Thyroid gland (tissue), 4 donors: ENCODE measurements at regions of chr5 and their contacts with region 1.

Region 1: DNA sequence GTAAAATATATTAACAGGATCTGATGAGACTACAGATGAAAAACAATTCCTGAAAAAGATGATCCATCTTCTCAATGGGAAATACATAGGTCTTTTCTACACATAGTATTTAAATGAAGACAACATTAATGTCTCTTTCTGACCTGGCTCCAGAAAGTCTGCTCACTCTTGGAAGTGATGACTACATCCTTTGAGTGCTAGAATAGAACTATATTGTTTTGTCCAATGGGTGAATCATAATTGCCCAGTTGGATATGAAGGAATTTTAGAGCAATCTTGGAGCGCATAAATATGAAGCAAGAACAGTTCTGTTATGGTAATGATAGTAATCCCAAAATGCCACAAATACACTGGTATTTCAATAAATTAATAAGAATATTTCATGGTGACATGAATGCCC is 322.1 kb downstream of the DEPDC1B start:
- DNase-seq: no peak
- H3K4me3 ChIP-seq: no peak overlapping the region
- H3K27ac ChIP-seq: no peak overlapping the region
- H3K4me1 ChIP-seq: peaks cover 9 to 12% of the 10 kb centered on the region in 2 donors
- H3K27me3 ChIP-seq: no peaks in the 10 kb centered on the region
- CTCF ChIP-seq: no peak
- POLR2A ChIP-seq: no peak

Region 2: DNA sequence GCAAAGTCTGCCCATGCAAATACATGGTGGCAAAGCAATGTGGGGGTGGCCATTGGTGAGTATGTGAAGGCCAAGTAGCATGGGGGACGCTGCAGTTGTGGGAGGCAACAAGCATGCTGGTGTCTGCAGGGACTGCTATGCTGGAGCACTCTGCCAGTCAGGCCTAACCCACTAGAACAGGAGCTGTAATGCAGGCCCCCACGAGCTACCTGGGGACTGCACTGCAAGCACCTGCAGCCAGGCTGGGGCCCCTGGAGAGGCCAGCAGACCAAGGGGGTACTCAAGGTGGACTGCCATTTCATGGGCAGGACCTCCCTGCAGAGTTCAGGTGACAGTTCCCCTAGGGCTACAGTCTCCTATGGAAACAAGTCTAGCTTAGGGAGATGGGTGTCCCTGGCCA is 300.5 kb before region 1 on chr5:
- intact Hi-C with region 1: no loop called
- DNase-seq: no peak
- H3K4me3 ChIP-seq: no peak overlapping the region
- H3K27ac ChIP-seq: no peak overlapping the region
- H3K4me1 ChIP-seq: no peaks in the 10 kb centered on the region
- H3K27me3 ChIP-seq: no peaks in the 10 kb centered on the region
- CTCF ChIP-seq: no peak
- POLR2A ChIP-seq: no peak

Region 3: DNA sequence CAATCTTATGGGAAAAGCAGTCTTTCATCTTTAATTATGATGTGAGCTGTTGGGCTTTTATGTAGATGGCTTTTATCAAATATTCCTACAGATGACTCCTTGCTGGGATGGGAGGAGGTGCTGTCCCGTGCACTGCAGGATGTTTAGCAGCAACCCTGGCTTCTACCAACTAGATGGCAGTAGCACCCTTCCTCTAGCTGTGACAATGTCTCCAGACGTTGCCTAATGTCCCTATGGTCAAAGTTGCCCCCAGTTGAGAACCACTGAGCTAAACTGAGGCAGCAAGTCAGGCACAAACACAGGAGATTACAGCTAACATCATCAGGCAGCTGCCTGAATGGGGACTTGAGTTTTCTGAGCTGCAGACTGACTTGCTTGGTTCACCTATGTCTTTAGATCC is 82.4 kb before region 1 on chr5:
- intact Hi-C with region 1: loop called (anchors 10 kb)
- DNase-seq: peak; percentile 17 to 25
- H3K4me3 ChIP-seq: no peak overlapping the region
- H3K27ac ChIP-seq: no peak overlapping the region
- H3K4me1 ChIP-seq: no peaks in the 10 kb centered on the region
- H3K27me3 ChIP-seq: no peaks in the 10 kb centered on the region
- CTCF ChIP-seq: peak in 4 of 6 experiments; percentile 42 to 69 (median 62)
- POLR2A ChIP-seq: no peak